Mammary epithelial cell (primary cell): ENCODE measurements at regions of chr2 and their contacts with region 1.

Region 1: GRCh38 chr2:190382851-190383250 is 25.3 kb upstream of the MFSD6 start:
- DNase-seq: peak; percentile 65
- H3K4me3 ChIP-seq: no peak overlapping the region
- H3K27ac ChIP-seq: no peak overlapping the region
- H3K4me1 ChIP-seq: no peaks in the 10 kb centered on the region
- H3K27me3 ChIP-seq: no peaks in the 10 kb centered on the region
- CTCF ChIP-seq: peak; percentile 64 to 91

Region 2: DNA sequence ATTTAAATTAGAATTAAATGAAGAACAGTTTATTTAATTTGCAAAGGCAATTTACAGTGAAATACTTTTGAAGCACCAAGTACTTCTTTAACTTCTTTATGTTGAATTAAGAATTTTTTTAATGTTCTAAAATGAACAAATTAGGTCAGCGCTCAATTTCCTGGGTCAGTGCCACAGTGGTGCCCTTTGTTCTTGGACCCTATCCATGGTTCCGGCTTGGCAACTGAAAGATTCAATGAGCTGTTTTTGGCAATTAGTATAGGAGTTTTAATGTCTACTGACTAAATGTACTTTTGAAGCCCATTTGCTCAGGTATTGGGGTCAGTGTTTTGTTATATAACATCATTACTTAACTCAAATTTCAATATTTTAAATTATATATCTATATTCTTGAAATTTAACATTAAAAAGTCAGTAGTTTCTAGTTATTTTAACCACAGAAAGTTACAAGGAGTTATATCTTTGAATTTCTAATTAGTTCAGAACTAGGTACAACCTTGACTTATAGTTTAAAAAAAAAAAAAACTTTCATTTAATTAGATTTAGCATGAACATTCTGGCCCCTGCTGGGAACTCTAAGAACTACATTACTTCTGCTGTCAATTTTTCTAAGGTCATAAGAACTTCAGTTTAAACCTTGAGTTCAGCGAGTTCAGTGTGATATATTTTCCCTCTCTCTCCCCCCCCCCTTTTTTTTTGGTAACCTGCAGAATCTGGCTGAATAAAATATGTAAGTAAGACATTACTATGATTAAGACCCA is 312.7 kb before region 1 on chr2:
- CTCF ChIA-PET with region 1: no interaction called
- dilution Hi-C with region 1: no loop called
- in situ Hi-C with region 1: no loop called
- intact Hi-C with region 1: no loop called
- DNase-seq: peak; percentile 32
- H3K4me3 ChIP-seq: no peak overlapping the region
- H3K27ac ChIP-seq: no peak overlapping the region
- H3K4me1 ChIP-seq: no peaks in the 10 kb centered on the region
- H3K27me3 ChIP-seq: no peaks in the 10 kb centered on the region
- CTCF ChIP-seq: peak; percentile 52 to 63

Region 3: DNA sequence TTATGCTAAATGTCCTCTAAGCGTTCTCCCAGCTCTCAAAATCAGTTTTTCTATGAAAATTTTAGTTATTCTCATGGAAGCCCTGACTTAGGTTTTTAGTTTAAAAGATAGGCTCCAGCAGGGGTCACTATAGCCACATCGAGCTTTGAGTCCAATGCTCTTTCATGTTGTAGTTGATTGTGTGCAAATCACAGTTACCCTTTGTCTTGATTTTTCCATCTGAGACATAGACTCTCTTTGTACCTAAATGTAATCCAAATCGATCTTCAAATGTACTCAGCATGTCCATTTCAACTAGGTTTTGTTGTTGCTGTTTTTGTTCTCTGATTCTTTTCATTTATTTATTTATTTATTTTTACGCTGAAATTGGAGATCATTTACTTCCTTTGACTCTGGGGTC is 293.9 kb before region 1 on chr2:
- CTCF ChIA-PET with region 1: no interaction called
- dilution Hi-C with region 1: no loop called
- in situ Hi-C with region 1: loop called in 1 of 2 experiments (anchors 10 kb)
- intact Hi-C with region 1: no loop called
- DNase-seq: peak; percentile 47
- H3K4me3 ChIP-seq: no peak overlapping the region
- H3K27ac ChIP-seq: no peak overlapping the region
- H3K4me1 ChIP-seq: no peaks in the 10 kb centered on the region
- H3K27me3 ChIP-seq: no peaks in the 10 kb centered on the region
- CTCF ChIP-seq: peak; percentile 71 to 72

Region 4: DNA sequence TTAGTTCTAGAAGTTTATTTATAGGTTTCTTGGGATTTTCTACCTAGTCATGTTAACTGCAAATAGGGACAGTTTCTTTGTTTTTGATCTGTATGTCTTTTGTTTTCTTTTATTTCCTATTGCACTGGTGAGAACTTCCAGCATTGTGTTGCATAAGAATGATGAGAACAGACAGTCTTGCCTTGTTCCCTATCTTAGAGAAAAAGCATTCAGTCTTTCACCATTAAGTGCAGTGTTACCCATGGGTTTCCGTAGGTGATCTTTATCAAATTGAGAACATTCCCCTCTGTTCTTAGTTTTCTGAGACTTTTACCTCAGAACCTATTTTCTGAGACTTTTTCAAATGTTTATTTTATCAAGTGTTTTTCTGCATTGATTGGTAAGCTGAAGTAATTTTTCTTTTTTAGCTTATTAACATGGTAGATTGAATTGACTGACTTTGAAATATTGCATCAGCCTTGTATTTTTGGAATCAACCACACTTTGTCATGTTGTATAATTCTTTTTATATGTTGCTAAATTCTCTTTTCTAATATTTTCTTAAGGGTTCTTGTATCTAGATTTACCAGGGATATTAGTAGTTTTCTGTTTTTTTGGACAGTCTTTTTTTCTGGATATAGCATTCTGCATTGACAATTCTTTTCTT is 42.5 kb after region 1 on chr2:
- CTCF ChIA-PET with region 1: no interaction called
- dilution Hi-C with region 1: no loop called
- in situ Hi-C with region 1: no loop called
- intact Hi-C with region 1: no loop called
- DNase-seq: no peak
- H3K4me3 ChIP-seq: no peak overlapping the region
- H3K27ac ChIP-seq: no peak overlapping the region
- H3K4me1 ChIP-seq: no peaks in the 10 kb centered on the region
- H3K27me3 ChIP-seq: no peaks in the 10 kb centered on the region
- CTCF ChIP-seq: no peak

Region 5: DNA sequence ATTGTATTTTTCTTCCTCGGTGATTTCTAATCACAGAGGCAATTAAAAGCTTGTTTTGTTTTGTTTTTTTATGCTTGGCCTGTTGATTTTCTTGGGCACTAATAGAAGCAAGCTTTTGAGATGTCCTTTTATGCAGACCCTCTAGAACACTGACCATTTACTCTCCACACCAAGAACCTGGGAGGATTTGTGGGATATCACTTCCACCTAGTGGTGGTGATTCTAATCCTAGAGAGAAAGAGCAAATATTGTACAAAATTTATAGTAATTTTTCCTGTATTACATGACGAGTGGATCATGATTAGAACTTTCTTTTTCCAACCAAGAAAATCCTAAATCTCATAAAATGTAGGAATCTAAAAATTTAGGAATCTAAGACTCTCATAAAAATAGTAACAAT is 128.3 kb after region 1 on chr2:
- CTCF ChIA-PET with region 1: no interaction called
- dilution Hi-C with region 1: no loop called
- in situ Hi-C with region 1: loop called (anchors 10 to 25 kb)
- intact Hi-C with region 1: loop called (anchors 1 kb)
- DNase-seq: no peak
- H3K4me3 ChIP-seq: no peak overlapping the region
- H3K27ac ChIP-seq: no peak overlapping the region
- H3K4me1 ChIP-seq: peaks cover 6% of the 10 kb centered on the region
- H3K27me3 ChIP-seq: no peaks in the 10 kb centered on the region
- CTCF ChIP-seq: peak; percentile 30 to 52

Region 6: DNA sequence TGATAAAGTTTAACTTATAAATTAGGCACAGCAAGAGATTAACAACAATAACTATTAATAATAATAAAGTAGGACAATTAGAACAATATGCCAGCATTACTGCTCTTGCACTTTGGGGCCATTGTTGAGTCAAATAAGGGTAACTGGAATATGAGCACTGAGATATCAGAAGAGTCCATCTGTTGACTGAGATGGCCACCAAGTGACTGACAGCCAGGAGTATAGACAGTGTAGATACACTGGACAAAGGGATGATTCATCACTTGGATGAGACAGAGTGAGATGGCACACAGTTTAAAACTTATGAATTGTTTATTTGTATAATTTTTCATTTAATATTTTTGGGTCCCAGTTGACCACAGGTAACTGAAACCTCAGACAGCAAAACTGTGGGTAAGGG is 286.0 kb after region 1 on chr2:
- CTCF ChIA-PET with region 1: no interaction called
- dilution Hi-C with region 1: no loop called
- in situ Hi-C with region 1: no loop called
- intact Hi-C with region 1: loop called (anchors 5 kb)
- DNase-seq: peak; percentile 53
- H3K4me3 ChIP-seq: no peak overlapping the region
- H3K27ac ChIP-seq: no peak overlapping the region
- H3K4me1 ChIP-seq: peaks cover 20% of the 10 kb centered on the region
- H3K27me3 ChIP-seq: no peaks in the 10 kb centered on the region
- CTCF ChIP-seq: no peak

Region 7: GRCh38 chr2:190781604-190782198 is 398.9 kb after region 1 on chr2:
- CTCF ChIA-PET with region 1: no interaction called
- dilution Hi-C with region 1: no loop called
- in situ Hi-C with region 1: no loop called
- intact Hi-C with region 1: loop called (anchors 5 kb)
- DNase-seq: peak; percentile 43
- H3K4me3 ChIP-seq: no peak overlapping the region
- H3K27ac ChIP-seq: no peak overlapping the region
- H3K4me1 ChIP-seq: peaks cover 5% of the 10 kb centered on the region
- H3K27me3 ChIP-seq: no peaks in the 10 kb centered on the region
- CTCF ChIP-seq: peak; percentile 19 to 63

Region 8: GRCh38 chr2:190804182-190804795 is 421.4 kb after region 1 on chr2:
- CTCF ChIA-PET with region 1: no interaction called
- dilution Hi-C with region 1: no loop called
- in situ Hi-C with region 1: loop called in 1 of 2 experiments (anchors 10 kb)
- intact Hi-C with region 1: loop called (anchors 1 kb)
- DNase-seq: no peak
- H3K4me3 ChIP-seq: no peak overlapping the region
- H3K27ac ChIP-seq: no peak overlapping the region
- H3K4me1 ChIP-seq: no peaks in the 10 kb centered on the region
- H3K27me3 ChIP-seq: no peaks in the 10 kb centered on the region
- CTCF ChIP-seq: peak; percentile 58 to 74